ENCODE measurements at regions of chr14 and their contacts with region 1.

Region 1: DNA sequence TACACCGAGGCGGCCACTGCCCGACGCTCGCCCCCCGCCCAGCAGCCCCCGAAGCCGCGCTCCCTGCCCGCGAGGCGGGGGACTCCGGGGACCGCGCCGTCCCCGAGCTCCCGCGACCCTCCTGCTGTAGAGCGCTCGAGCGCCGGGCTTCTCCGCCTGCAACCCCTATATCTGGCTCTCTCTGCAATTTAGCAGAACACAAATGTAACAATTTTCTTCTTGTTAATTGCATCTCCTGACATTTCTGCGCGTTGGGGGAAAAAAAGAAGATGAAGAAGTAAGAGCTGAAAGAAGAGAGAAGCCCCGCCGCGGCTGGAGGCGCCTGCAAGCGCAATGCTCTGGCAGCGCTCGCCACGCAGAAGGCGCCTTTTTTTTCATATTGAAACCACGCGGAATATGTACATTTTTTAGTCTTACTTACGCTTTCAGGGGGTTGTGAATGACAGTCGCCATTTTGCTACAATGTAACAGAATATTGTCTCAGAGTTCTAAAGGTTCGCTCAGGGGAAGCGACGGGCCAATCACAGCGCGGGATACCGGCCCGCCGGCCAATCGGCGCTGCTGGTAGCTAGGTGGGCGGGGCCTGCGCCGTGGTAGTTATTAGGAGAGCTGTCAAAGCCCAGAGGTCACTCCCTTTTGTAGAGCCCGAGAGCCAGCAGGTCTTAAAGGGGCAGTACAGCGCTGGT is at the start of gene DPF3:
- DNase-seq: peak; percentile 97
- H3K4me3 Mint-ChIP-seq: peak within 1 kb of the TSS; percentile 82
- H3K27ac Mint-ChIP-seq: peak within 1 kb of the TSS; percentile 37
- H3K4me1 Mint-ChIP-seq: no peaks in the 10 kb centered on the region
- H3K27me3 Mint-ChIP-seq: no peaks in the 10 kb centered on the region
- CTCF ChIP-seq: no peak
- total RNA-seq, gene DPF3: 1.9 and 2.1 TPM in 2 replicates

Region 2: GRCh38 chr14:72665259-72665658 is 228.5 kb before region 1 on chr14:
- CTCF ChIA-PET with region 1: no interaction called
- POLR2A ChIA-PET with region 1: no interaction called
- intact Hi-C with region 1: loop called (anchors 2 kb)
- DNase-seq: peak; percentile 82
- H3K4me3 Mint-ChIP-seq: no peak overlapping the region
- H3K27ac Mint-ChIP-seq: peak overlapping the region; percentile 76
- H3K4me1 Mint-ChIP-seq: peaks cover 30% of the 10 kb centered on the region
- H3K27me3 Mint-ChIP-seq: no peaks in the 10 kb centered on the region
- CTCF ChIP-seq: no peak

Region 3: GRCh38 chr14:72745991-72746980 is 147.5 kb before region 1 on chr14:
- CTCF ChIA-PET with region 1: no interaction called
- POLR2A ChIA-PET with region 1: interaction called, 3 read pairs
- intact Hi-C with region 1: loop called (anchors 2 kb)
- DNase-seq: peak; percentile 61
- H3K4me3 Mint-ChIP-seq: no peak overlapping the region
- H3K27ac Mint-ChIP-seq: peak overlapping the region; percentile 76
- H3K4me1 Mint-ChIP-seq: peaks cover 17% of the 10 kb centered on the region
- H3K27me3 Mint-ChIP-seq: no peaks in the 10 kb centered on the region
- CTCF ChIP-seq: peak; percentile 22

Region 4: GRCh38 chr14:72904840-72905561 is 11.2 kb after region 1 on chr14:
- CTCF ChIA-PET with region 1: interaction called, 9 read pairs
- POLR2A ChIA-PET with region 1: interaction called, 13 read pairs
- intact Hi-C with region 1: no loop called
- DNase-seq: peak; percentile 82
- H3K4me3 Mint-ChIP-seq: no peak overlapping the region
- H3K27ac Mint-ChIP-seq: no peak overlapping the region
- H3K4me1 Mint-ChIP-seq: peaks cover 22% of the 10 kb centered on the region
- H3K27me3 Mint-ChIP-seq: no peaks in the 10 kb centered on the region
- CTCF ChIP-seq: peak; percentile 90

Region 5: GRCh38 chr14:72926292-72927028 is 32.7 kb after region 1 on chr14 and contains the start of gene DCAF4:
- CTCF ChIA-PET with region 1: no interaction called
- POLR2A ChIA-PET with region 1: interaction called, 12 read pairs
- intact Hi-C with region 1: no loop called
- DNase-seq: peak; percentile 99
- H3K4me3 Mint-ChIP-seq: peak within 1 kb of the TSS; percentile 90
- H3K27ac Mint-ChIP-seq: peak within 1 kb of the TSS; percentile 96
- H3K4me1 Mint-ChIP-seq: no peaks in the 10 kb centered on the region
- H3K27me3 Mint-ChIP-seq: no peaks in the 10 kb centered on the region
- CTCF ChIP-seq: no peak
- total RNA-seq, gene DCAF4: 27.9 and 39.4 TPM in 2 replicates

Region 6: GRCh38 chr14:72941286-72941985 is 47.7 kb after region 1 on chr14:
- CTCF ChIA-PET with region 1: no interaction called
- POLR2A ChIA-PET with region 1: no interaction called
- intact Hi-C with region 1: no loop called
- DNase-seq: no peak
- H3K4me3 Mint-ChIP-seq: no peak overlapping the region
- H3K27ac Mint-ChIP-seq: no peak overlapping the region
- H3K4me1 Mint-ChIP-seq: no peaks in the 10 kb centered on the region
- H3K27me3 Mint-ChIP-seq: no peaks in the 10 kb centered on the region
- CTCF ChIP-seq: no peak

Region 7: GRCh38 chr14:73008501-73008900 is 114.7 kb after region 1 on chr14:
- CTCF ChIA-PET with region 1: no interaction called
- POLR2A ChIA-PET with region 1: no interaction called
- intact Hi-C with region 1: no loop called
- DNase-seq: no peak
- H3K4me3 Mint-ChIP-seq: no peak overlapping the region
- H3K27ac Mint-ChIP-seq: no peak overlapping the region
- H3K4me1 Mint-ChIP-seq: no peaks in the 10 kb centered on the region
- H3K27me3 Mint-ChIP-seq: no peaks in the 10 kb centered on the region
- CTCF ChIP-seq: no peak

Region 8: DNA sequence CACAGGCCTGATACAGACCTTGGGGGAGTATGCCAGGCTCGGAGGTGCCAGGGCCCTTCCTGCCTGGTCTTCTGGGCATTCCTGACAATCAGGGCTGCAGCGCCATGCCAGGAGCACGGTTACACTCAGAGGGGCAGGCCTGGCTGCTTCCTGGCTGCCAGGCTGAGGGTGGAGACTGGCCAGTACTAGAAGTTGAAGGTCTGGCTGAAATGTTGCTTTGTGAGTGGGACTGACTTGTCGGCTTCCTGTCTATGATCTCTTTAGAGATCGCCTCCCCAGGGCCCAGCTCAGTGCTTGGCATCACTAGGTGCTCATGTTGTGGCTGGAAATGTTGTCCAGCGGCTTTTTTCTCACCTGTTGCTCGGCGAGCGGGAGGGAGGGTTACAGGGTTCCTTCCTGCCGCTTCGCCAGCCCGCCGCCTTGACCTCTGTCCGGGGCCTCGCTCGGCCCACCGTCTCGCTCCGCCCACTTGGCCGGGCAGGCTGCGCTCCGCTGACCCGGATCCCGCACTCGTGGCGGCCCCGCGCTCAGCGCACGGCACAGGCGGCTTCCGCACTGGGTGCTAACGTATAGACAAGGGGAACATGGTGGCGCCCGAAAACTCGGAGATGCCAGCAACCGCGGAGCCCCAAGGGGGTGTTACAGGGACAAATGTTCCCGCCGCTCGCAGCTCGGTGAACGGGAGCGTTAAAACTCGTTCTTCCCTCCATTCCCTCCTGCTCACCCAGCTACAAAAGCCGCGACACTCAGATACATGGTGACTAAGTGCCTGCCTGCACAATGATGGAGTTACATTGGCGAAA is 376.2 kb after region 1 on chr14:
- CTCF ChIA-PET with region 1: no interaction called
- POLR2A ChIA-PET with region 1: no interaction called
- intact Hi-C with region 1: no loop called
- DNase-seq: no peak
- H3K4me3 Mint-ChIP-seq: no peak overlapping the region
- H3K27ac Mint-ChIP-seq: no peak overlapping the region
- H3K4me1 Mint-ChIP-seq: no peaks in the 10 kb centered on the region
- H3K27me3 Mint-ChIP-seq: no peaks in the 10 kb centered on the region
- CTCF ChIP-seq: no peak